ENCODE measurements at regions of chr19 and their contacts with region 1.

Region 1: GRCh38 chr19:48842789-48843162 is 6.5 kb upstream of the HSD17B14 start:
- DNase-seq: no peak
- ATAC-seq: peak; percentile 83
- H3K4me3 ChIP-seq: no peak overlapping the region
- H3K27ac ChIP-seq: no peak overlapping the region
- H3K4me1 ChIP-seq: no peaks in the 10 kb centered on the region
- H3K27me3 ChIP-seq: no peaks in the 10 kb centered on the region
- CTCF ChIP-seq: peak; percentile 75 to 85 (median 78)
- EP300 ChIP-seq: no peak
- POLR2A ChIP-seq: no peak
- RAD21 ChIP-seq: peak; percentile 79

Region 2: GRCh38 chr19:48646001-48646721 is 196.6 kb before region 1 on chr19 and contains the start of gene CA11:
- CTCF ChIA-PET with region 1: interaction called, 31 read pairs
- POLR2A ChIA-PET with region 1: interaction called, 4 read pairs
- RAD21 ChIA-PET with region 1: interaction called, 18 read pairs
- SMC1A ChIA-PET with region 1: interaction called, 13 read pairs
- in situ Hi-C with region 1: loop called (anchors 5 kb)
- intact Hi-C with region 1: loop called (anchors 5 kb)
- DNase-seq: no peak
- ATAC-seq: peak; percentile 93
- H3K4me3 ChIP-seq: peak within 1 kb of the TSS; percentile 91
- H3K27ac ChIP-seq: peak within 1 kb of the TSS; percentile 15; the same call in 1 of the 2 replicates
- H3K4me1 ChIP-seq: peaks cover 20% of the 10 kb centered on the region
- H3K27me3 ChIP-seq: no peaks in the 10 kb centered on the region
- CTCF ChIP-seq: peak; percentile 79 to 98 (median 96); a peak in 5 of 6 replicates
- EP300 ChIP-seq: no peak
- POLR2A ChIP-seq: peak; percentile 40; the same call in 1 of the 2 replicates
- RAD21 ChIP-seq: peak; percentile 97
- polyA plus RNA-seq, gene CA11: 5.4 to 7.5 TPM

Region 3: DNA sequence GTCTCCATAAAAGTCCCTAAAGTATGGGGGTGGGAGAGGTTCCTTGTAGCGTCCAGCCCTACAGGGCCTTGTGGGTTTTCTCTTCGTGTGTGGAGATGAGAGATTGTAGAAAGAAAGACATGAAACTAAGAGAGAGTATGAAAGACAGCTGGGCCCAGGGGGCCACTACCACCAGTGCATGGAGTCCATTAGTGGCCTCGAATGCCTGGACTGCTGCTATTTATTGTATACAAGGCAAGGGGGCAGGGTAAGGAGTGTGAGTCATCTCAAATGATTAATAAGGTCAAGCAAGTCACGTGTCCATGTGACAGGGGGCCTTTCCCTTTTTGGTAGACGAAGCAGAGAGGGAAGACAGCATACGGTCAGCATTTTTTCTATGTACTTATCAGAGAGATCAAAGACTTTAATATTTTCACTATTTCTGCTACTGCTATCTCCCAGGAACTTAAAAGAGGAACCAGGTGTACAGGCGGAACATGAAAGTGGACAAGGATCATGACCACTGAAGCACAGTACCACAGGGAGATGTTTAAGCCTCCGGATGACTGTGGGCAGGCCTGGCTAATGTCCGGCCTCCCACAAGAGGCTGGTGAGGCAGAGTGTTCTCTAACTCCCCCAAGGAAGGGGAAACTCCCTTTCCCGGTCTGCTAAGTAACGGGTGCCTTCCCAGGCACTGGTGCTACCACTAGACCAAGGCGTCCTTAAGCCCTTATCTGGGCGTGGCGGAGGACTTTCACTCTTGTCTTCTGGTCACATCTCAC is 62.0 kb before region 1 on chr19:
- CTCF ChIA-PET with region 1: interaction called, 520 read pairs
- POLR2A ChIA-PET with region 1: no interaction called
- RAD21 ChIA-PET with region 1: interaction called, 6 read pairs
- SMC1A ChIA-PET with region 1: interaction called, 20 read pairs
- in situ Hi-C with region 1: no loop called
- intact Hi-C with region 1: no loop called
- DNase-seq: peak; percentile 54
- ATAC-seq: peak; percentile 71
- H3K4me3 ChIP-seq: no peak overlapping the region
- H3K27ac ChIP-seq: no peak overlapping the region
- H3K4me1 ChIP-seq: peaks cover 3% of the 10 kb centered on the region; the same call in 1 of the 2 replicates
- H3K27me3 ChIP-seq: no peaks in the 10 kb centered on the region
- CTCF ChIP-seq: no peak
- EP300 ChIP-seq: no peak
- POLR2A ChIP-seq: no peak
- RAD21 ChIP-seq: no peak

Region 4: GRCh38 chr19:48812094-48812929 is 30.5 kb before region 1 on chr19:
- CTCF ChIA-PET with region 1: interaction called, 12 read pairs
- POLR2A ChIA-PET with region 1: interaction called, 6 read pairs
- RAD21 ChIA-PET with region 1: interaction called, 10 read pairs
- SMC1A ChIA-PET with region 1: interaction called, 3 read pairs
- in situ Hi-C with region 1: no loop called
- intact Hi-C with region 1: no loop called
- DNase-seq: no peak
- ATAC-seq: peak; percentile 84
- H3K4me3 ChIP-seq: no peak overlapping the region; the same call in 1 of the 2 replicates
- H3K27ac ChIP-seq: no peak overlapping the region
- H3K4me1 ChIP-seq: peaks cover 12% of the 10 kb centered on the region; the same call in 1 of the 2 replicates
- H3K27me3 ChIP-seq: no peaks in the 10 kb centered on the region
- CTCF ChIP-seq: no peak
- EP300 ChIP-seq: no peak
- POLR2A ChIP-seq: peak; percentile 60
- RAD21 ChIP-seq: no peak

Region 5: DNA sequence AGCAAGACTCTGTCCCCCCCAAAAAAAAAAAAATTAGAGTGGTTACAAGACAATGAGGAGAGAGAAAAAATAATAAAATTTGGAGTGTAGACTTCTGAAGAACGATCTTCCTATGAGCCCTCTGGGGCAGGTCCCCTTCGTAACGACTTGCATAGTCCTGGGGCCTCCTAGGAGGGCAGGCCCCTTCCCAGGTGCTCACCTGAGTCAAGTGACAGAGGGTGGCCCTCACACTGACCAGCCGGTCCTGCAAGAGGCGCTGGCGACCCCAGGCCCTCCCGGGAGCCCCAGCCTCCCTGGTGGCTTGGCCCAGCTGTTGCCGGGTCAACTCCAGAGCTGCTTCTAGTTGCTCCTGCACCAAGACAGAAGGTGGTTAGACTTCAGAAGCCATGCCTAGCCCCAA is 10.7 kb after region 1 on chr19:
- CTCF ChIA-PET with region 1: interaction called, 39 read pairs
- POLR2A ChIA-PET with region 1: interaction called, 3 read pairs
- RAD21 ChIA-PET with region 1: interaction called, 3 read pairs
- SMC1A ChIA-PET with region 1: interaction called, 5 read pairs
- in situ Hi-C with region 1: no loop called
- intact Hi-C with region 1: no loop called
- DNase-seq: no peak
- ATAC-seq: no peak
- H3K4me3 ChIP-seq: no peak overlapping the region
- H3K27ac ChIP-seq: no peak overlapping the region
- H3K4me1 ChIP-seq: peaks cover 7% of the 10 kb centered on the region
- H3K27me3 ChIP-seq: no peaks in the 10 kb centered on the region
- CTCF ChIP-seq: no peak
- EP300 ChIP-seq: no peak
- POLR2A ChIP-seq: no peak
- RAD21 ChIP-seq: no peak

Region 6: GRCh38 chr19:48954595-48955310 is 112.0 kb after region 1 on chr19 and contains the start of gene BAX:
- CTCF ChIA-PET with region 1: interaction called, 10 read pairs
- POLR2A ChIA-PET with region 1: no interaction called
- RAD21 ChIA-PET with region 1: interaction called, 3 read pairs
- SMC1A ChIA-PET with region 1: interaction called, 3 read pairs
- in situ Hi-C with region 1: no loop called
- intact Hi-C with region 1: no loop called
- DNase-seq: peak; percentile 92
- ATAC-seq: peak; percentile 98
- H3K4me3 ChIP-seq: peak within 1 kb of the TSS; percentile 98
- H3K27ac ChIP-seq: peak within 1 kb of the TSS; percentile 99
- H3K4me1 ChIP-seq: peaks cover 5% of the 10 kb centered on the region; the same call in 1 of the 2 replicates
- H3K27me3 ChIP-seq: no peaks in the 10 kb centered on the region
- CTCF ChIP-seq: peak in 1 of 3 experiments; percentile 18; a peak in 1 of 6 replicates
- EP300 ChIP-seq: no peak
- POLR2A ChIP-seq: peak; percentile 86
- RAD21 ChIP-seq: 0 out of 2 replicates have a peak, but pooled peaks have one; percentile 20
- polyA plus RNA-seq, gene BAX: 7.2 to 15.3 TPM

Region 7: DNA sequence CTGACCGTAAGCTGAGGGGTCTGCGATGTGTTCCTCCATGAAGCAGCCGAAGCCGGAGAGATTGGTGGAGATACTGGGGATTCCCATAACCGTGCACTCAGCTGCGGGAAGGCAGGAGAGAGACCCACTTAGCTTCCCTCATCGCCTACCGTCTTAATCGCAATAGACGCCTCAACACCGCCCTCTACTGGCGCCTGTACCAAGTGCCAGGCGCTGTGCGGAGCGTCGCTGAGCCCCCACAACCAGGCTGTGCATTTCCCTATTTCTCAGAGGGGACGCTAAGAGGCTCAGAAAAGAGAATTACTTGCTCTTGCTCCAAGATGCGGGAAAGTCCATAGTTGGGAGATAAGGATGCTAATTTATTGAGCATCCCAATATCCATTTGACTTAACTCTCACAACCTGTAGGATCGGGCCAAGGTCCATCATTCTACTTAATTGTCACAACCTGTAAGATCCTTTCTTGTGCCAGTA is 128.2 kb after region 1 on chr19:
- CTCF ChIA-PET with region 1: interaction called, 113 read pairs
- POLR2A ChIA-PET with region 1: interaction called, 6 read pairs
- RAD21 ChIA-PET with region 1: interaction called, 28 read pairs
- SMC1A ChIA-PET with region 1: interaction called, 22 read pairs
- in situ Hi-C with region 1: no loop called
- intact Hi-C with region 1: loop called (anchors 2 kb)
- DNase-seq: no peak
- ATAC-seq: peak; percentile 85
- H3K4me3 ChIP-seq: no peak overlapping the region
- H3K27ac ChIP-seq: 0 out of 2 replicates have a peak overlapping the region, but pooled peaks have one; percentile 13
- H3K4me1 ChIP-seq: peaks cover 17% of the 10 kb centered on the region
- H3K27me3 ChIP-seq: no peaks in the 10 kb centered on the region
- CTCF ChIP-seq: peak; percentile 92 to 97 (median 94)
- EP300 ChIP-seq: no peak
- POLR2A ChIP-seq: no peak
- RAD21 ChIP-seq: peak; percentile 86

Measured in GM12878 (cell line).